ENCODE measurements at regions of chr18 and their contacts with region 1.

Region 1: DNA sequence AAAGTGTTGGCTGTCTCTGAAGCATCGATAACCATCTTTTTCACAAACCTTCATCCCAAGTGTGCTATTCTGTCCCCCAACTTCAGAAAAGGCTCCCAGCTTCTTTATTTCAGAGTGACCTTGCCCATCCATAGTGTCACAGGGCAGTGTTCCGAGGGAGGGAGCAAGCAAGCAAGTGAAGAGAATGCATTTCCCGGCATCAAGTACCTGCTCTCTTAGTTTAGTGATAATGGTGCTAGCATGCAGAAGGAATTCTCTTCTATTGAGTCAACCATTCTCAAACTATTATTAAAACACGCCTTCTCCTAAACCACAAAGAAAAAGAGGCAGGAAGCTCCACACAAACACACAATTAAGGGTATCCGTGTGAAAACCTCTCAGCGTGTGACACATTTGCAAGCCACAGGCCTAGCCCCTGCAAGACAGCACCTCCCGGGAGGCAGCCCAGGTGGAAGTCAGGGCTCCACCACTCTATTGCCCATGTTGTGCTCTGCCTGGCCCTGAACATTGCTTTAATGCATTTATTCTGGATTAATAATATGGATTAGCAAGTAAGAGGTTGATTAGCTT is 504.9 kb downstream of the GALR1 start:
- DNase-seq: no peak
- H3K4me3 ChIP-seq: no peak overlapping the region
- H3K27ac ChIP-seq: no peak overlapping the region
- H3K4me1 ChIP-seq: no peaks in the 10 kb centered on the region
- H3K27me3 ChIP-seq: peaks cover 0 to 6% of the 10 kb centered on the region in 2 donors
- CTCF ChIP-seq: no peak
- POLR2A ChIP-seq: no peak

Region 2: DNA sequence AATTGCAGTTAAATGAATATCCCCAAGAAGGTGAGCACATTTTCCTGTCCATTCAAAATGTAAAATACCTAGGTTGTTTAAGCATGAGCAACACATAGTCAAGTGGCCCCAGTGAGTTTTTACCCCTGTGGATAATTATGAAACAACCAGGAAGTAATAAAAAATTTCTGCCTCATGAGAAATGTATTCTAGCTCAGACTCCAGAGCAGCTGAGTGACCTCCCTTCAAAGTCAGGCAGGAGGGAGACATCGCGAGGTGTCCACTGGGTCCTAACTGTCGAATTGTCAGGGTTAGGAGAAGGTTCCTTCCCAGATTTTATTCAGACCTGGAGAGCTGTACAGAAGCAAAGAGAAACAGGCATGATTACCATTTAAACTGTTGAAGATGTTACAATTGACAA is 1910.4 kb before region 1 on chr18:
- intact Hi-C with region 1: loop called (anchors 10 kb)
- DNase-seq: no peak
- H3K4me3 ChIP-seq: no peak overlapping the region
- H3K27ac ChIP-seq: no peak overlapping the region
- H3K4me1 ChIP-seq: no peaks in the 10 kb centered on the region
- H3K27me3 ChIP-seq: no peaks in the 10 kb centered on the region
- CTCF ChIP-seq: no peak
- POLR2A ChIP-seq: no peak

Region 3: GRCh38 chr18:79588636-79589481 is 1834.3 kb after region 1 on chr18:
- intact Hi-C with region 1: no loop called
- DNase-seq: peak; percentile 71 to 85
- H3K4me3 ChIP-seq: peak overlapping the region in 1 of 3 donors; percentile 49
- H3K27ac ChIP-seq: peak overlapping the region; percentile 88 to 89
- H3K4me1 ChIP-seq: peaks cover 0 to 3% of the 10 kb centered on the region in 2 donors
- H3K27me3 ChIP-seq: no peaks in the 10 kb centered on the region
- CTCF ChIP-seq: peak in 1 of 3 donors; percentile 12
- POLR2A ChIP-seq: no peak

Measured in breast epithelium (tissue), 4 donors.